Posterior vena cava (tissue), 2 donors: ENCODE measurements at regions of chr1 and their contacts with region 1.

Region 1: GRCh38 chr1:204941421-204942338 is 71.0 kb downstream of the NFASC start:
- DNase-seq: peak; percentile 89

Region 2: GRCh38 chr1:204104133-204104871 is 837.4 kb before region 1 on chr1:
- intact Hi-C with region 1: no loop called
- DNase-seq: no peak

Region 3: GRCh38 chr1:204806943-204807687 is 134.6 kb before region 1 on chr1:
- intact Hi-C with region 1: loop called in 1 of 2 experiments (anchors 5 kb)
- DNase-seq: peak; percentile 91